MCF 10A (cell line): ENCODE measurements at regions of chr13 and their contacts with region 1.

Region 1: DNA sequence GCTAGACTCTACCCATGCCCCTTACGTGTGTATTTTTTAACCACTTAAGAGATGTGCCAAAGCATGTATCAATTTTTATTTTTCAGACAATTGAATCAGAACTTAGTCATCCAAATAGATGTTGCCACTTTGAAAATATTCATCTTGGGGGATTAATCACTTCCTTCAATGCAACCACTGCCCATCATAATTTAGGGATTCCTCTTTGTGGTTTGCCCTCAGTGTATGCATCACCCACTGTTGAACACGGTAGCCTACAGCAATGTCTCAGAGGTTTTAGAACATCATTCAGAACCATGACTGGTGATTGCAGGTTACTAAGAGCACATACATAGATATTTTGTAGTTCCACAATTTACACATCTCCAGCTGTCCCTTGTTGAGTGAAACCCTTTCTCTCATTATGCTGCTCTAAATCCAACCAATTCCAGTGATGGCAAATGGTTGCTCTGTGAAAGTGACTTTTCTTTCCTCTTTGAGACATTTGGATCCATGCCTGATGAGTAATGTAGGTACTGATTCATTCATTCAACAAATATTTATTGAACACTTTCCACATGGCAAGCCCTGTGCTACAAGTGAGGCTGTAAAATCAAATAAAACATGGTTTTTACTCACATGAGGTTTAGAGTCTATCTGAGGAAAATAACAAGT is 60.6 kb upstream of the SERP2 start:
- DNase-seq: peak; percentile 94
- H3K4me3 Mint-ChIP-seq: peak overlapping the region; percentile 22
- H3K27ac Mint-ChIP-seq: peak overlapping the region; percentile 93
- H3K4me1 Mint-ChIP-seq: peaks cover 67% of the 10 kb centered on the region
- H3K27me3 Mint-ChIP-seq: no peaks in the 10 kb centered on the region
- CTCF ChIP-seq: no peak

Region 2: DNA sequence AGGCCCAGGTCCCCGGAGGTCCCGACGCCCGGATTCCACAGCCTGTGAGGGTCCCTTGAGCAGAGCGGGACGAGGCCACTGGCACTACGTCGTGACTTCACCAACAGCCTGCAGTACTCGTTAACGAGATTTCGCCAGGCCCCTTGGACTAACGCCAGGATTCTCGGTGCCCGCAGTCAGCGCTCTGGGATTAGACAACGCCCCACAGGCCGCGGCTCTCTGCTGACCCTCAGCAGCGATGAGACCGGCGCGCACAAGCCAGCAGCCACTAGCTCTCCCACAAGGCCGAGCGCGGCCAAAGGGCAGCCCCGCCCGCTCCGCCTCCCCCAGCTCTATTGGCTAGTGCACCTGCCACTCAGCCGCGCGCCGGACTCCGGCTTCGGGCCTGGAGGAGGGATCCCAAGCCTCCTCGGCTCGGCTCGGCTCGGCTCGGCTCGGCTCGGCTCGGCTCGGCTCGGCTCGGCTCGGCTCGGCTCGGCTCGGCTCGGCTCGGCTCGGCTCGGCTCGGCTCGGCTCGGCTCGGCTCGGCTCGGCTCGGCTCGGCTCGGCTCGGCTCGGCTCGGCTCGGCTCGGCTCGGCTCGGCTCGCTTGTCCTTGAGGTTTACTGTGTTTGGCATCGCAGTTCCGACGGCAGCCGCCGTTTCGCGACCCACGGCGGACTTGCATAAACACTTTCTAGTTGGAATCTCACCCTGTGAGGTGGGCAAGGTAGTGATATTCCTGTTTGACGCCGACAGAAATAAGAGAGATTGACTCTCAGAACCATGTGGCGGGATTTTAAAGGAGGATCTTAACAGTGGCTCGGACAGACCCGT is 171.1 kb before region 1 on chr13:
- CTCF ChIA-PET with region 1: no interaction called
- POLR2A ChIA-PET with region 1: interaction called, 11 read pairs
- intact Hi-C with region 1: loop called (anchors 2 kb)
- DNase-seq: peak; percentile 97
- H3K4me3 Mint-ChIP-seq: peak overlapping the region; percentile 91
- H3K27ac Mint-ChIP-seq: peak overlapping the region; percentile 100
- H3K4me1 Mint-ChIP-seq: peaks cover 14% of the 10 kb centered on the region
- H3K27me3 Mint-ChIP-seq: no peaks in the 10 kb centered on the region
- CTCF ChIP-seq: no peak

Region 3: GRCh38 chr13:44231786-44232516 is 81.1 kb before region 1 on chr13:
- CTCF ChIA-PET with region 1: interaction called, 4 read pairs
- POLR2A ChIA-PET with region 1: interaction called, 24 read pairs
- intact Hi-C with region 1: loop called (anchors 1 kb)
- DNase-seq: peak; percentile 99
- H3K4me3 Mint-ChIP-seq: peak overlapping the region; percentile 34
- H3K27ac Mint-ChIP-seq: peak overlapping the region; percentile 86
- H3K4me1 Mint-ChIP-seq: peaks cover 28% of the 10 kb centered on the region
- H3K27me3 Mint-ChIP-seq: no peaks in the 10 kb centered on the region
- CTCF ChIP-seq: no peak

Region 4: GRCh38 chr13:44267966-44268365 is 45.1 kb before region 1 on chr13:
- CTCF ChIA-PET with region 1: interaction called, 3 read pairs
- POLR2A ChIA-PET with region 1: interaction called, 82 read pairs
- intact Hi-C with region 1: loop called (anchors 1 kb)
- DNase-seq: peak; percentile 80
- H3K4me3 Mint-ChIP-seq: peak overlapping the region; percentile 50
- H3K27ac Mint-ChIP-seq: peak overlapping the region; percentile 97
- H3K4me1 Mint-ChIP-seq: peaks cover 57% of the 10 kb centered on the region
- H3K27me3 Mint-ChIP-seq: no peaks in the 10 kb centered on the region
- CTCF ChIP-seq: no peak

Region 5: GRCh38 chr13:44364348-44365049 is 51.5 kb after region 1 on chr13:
- CTCF ChIA-PET with region 1: no interaction called
- POLR2A ChIA-PET with region 1: interaction called, 4 read pairs
- intact Hi-C with region 1: loop called (anchors 5 kb)
- DNase-seq: peak; percentile 69
- H3K4me3 Mint-ChIP-seq: no peak overlapping the region
- H3K27ac Mint-ChIP-seq: no peak overlapping the region
- H3K4me1 Mint-ChIP-seq: peaks cover 20% of the 10 kb centered on the region
- H3K27me3 Mint-ChIP-seq: no peaks in the 10 kb centered on the region
- CTCF ChIP-seq: no peak